Pancreas (tissue), 10 donors: ENCODE measurements at regions of chr2 and their contacts with region 1.

Region 1: DNA sequence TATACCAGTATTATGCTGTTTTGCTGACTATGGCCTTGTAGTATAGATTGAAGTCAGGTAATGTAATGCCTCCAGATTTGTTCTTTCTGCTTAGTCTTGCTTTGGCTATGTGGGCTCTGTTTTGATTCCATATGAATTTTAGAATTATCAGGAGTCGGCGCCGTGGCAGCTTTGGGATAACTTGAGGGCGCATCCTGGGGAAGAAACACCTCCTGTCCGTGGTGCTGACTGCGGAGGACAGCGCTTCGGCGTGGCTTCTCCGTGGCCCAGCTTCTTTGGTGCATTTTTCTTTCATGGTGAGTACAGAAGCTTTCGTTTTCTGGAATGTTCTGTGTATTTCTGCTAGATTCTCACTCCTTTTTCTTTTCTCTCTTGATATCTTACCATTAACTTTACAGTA is 25.2 kb downstream of the CCDC74A start:
- DNase-seq: no peak
- ATAC-seq: no peak
- H3K4me3 ChIP-seq: no peak overlapping the region
- H3K27ac ChIP-seq: no peak overlapping the region
- H3K4me1 ChIP-seq: no peaks in the 10 kb centered on the region
- H3K27me3 ChIP-seq: no peaks in the 10 kb centered on the region
- CTCF ChIP-seq: no peak

Region 2: DNA sequence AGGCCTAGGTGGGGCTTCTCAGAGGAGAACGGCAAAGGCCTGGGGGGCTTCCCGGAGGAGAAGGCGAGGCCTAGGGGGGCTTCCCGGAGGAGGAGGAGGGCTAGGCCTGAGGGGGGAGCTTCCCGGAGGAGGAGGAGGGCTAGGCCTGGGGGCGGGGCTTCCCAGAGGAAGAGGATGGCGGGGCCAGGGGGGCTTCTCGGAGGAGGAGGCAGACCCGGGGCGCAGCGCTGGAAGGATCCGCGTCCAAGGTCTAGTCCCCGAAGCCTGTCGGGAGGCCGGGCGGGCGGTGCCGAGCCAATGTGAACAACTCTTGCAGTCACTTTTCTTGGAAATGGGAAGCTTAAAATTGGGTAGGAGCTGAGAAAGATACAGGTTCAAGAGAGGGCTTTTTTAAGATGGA is 107.0 kb before region 1 on chr2:
- intact Hi-C with region 1: no loop called
- DNase-seq: peak in 1 of 6 donors; percentile 66
- ATAC-seq: no peak
- H3K4me3 ChIP-seq: no peak overlapping the region
- H3K27ac ChIP-seq: no peak overlapping the region
- H3K4me1 ChIP-seq: no peaks in the 10 kb centered on the region
- H3K27me3 ChIP-seq: no peaks in the 10 kb centered on the region
- CTCF ChIP-seq: no peak

Region 3: GRCh38 chr2:131580187-131580586 is 27.3 kb after region 1 on chr2:
- intact Hi-C with region 1: loop called in 1 of 3 experiments (anchors 2 kb)
- DNase-seq: no peak
- ATAC-seq: no peak
- H3K4me3 ChIP-seq: no peak overlapping the region
- H3K27ac ChIP-seq: no peak overlapping the region
- H3K4me1 ChIP-seq: no peaks in the 10 kb centered on the region
- H3K27me3 ChIP-seq: no peaks in the 10 kb centered on the region
- CTCF ChIP-seq: no peak